Activated CD4-positive, alpha-beta memory T cell treated with anti-CD3 and anti-CD28 coated beads for 36 hours (primary cell): ENCODE measurements at regions of chr20 and their contacts with region 1.

Region 1: GRCh38 chr20:36199345-36200257 is 36.7 kb upstream of the AAR2 start:
- DNase-seq: peak; percentile 81
- H3K4me3 Mint-ChIP-seq: no peak overlapping the region
- H3K27ac Mint-ChIP-seq: no peak overlapping the region
- H3K4me1 Mint-ChIP-seq: peaks cover 4% of the 10 kb centered on the region
- H3K27me3 Mint-ChIP-seq: peaks cover 1% of the 10 kb centered on the region

Region 2: GRCh38 chr20:36154700-36155628 is 44.6 kb before region 1 on chr20 and contains the start of gene EPB41L1:
- CTCF ChIA-PET with region 1: interaction called, 34 read pairs
- POLR2A ChIA-PET with region 1: no interaction called
- intact Hi-C with region 1: loop called (anchors 1 kb)
- DNase-seq: no peak
- H3K4me3 Mint-ChIP-seq: no peak within 1 kb of the TSS
- H3K27ac Mint-ChIP-seq: no peak within 1 kb of the TSS
- H3K4me1 Mint-ChIP-seq: no peaks in the 10 kb centered on the region
- H3K27me3 Mint-ChIP-seq: peaks cover 20% of the 10 kb centered on the region
- total RNA-seq, gene EPB41L1: 0.36 to 0.88 TPM

Region 3: GRCh38 chr20:36183155-36183944 is 16.3 kb before region 1 on chr20:
- CTCF ChIA-PET with region 1: interaction called, 14 read pairs
- POLR2A ChIA-PET with region 1: no interaction called
- intact Hi-C with region 1: no loop called
- DNase-seq: no peak
- H3K4me3 Mint-ChIP-seq: no peak overlapping the region
- H3K27ac Mint-ChIP-seq: no peak overlapping the region
- H3K4me1 Mint-ChIP-seq: no peaks in the 10 kb centered on the region
- H3K27me3 Mint-ChIP-seq: no peaks in the 10 kb centered on the region

Region 4: GRCh38 chr20:36214684-36215256 is 15.2 kb after region 1 on chr20:
- CTCF ChIA-PET with region 1: interaction called, 17 read pairs
- POLR2A ChIA-PET with region 1: no interaction called
- intact Hi-C with region 1: no loop called
- DNase-seq: peak; percentile 15
- H3K4me3 Mint-ChIP-seq: no peak overlapping the region
- H3K27ac Mint-ChIP-seq: no peak overlapping the region
- H3K4me1 Mint-ChIP-seq: no peaks in the 10 kb centered on the region
- H3K27me3 Mint-ChIP-seq: no peaks in the 10 kb centered on the region

Region 5: DNA sequence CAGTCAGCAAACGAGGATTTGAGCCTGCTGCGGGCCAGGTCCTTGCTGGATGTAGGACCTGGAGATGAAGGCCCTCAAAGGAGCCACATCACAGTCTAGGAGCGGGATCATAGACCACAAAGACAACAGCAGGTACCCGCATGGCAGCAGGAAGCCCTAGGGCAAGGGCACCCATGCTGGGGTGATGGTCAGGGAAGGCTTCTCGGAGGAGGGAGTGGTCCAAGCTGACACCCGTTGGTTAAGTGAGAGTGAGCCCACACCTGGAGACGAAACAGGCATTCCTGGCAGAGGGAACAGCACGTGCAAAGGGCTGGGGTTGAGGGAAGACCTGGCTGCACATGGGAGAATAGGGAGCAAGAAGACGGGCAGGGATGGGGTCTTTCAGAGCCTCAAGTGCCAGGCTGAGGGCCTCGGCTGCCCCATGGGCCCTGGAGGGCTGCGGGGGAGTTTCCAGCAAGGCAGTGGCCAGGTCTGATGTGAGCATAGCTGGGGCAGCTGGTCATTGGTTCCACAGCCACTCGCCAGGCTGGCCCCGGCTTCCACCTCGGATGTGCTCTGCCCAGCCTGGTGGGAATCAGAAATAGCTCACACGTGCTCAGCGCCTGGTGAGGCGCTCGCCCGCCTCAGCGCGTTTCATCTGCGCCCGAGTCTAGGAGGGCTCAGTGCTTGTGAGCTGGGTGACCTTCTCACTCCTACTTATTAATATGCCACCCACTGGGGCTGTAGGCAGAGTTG is 121.5 kb after region 1 on chr20:
- CTCF ChIA-PET with region 1: no interaction called
- POLR2A ChIA-PET with region 1: no interaction called
- intact Hi-C with region 1: no loop called
- DNase-seq: no peak
- H3K4me3 Mint-ChIP-seq: no peak overlapping the region
- H3K27ac Mint-ChIP-seq: no peak overlapping the region
- H3K4me1 Mint-ChIP-seq: no peaks in the 10 kb centered on the region
- H3K27me3 Mint-ChIP-seq: peaks cover 8% of the 10 kb centered on the region

Region 6: GRCh38 chr20:36367907-36368799 is 168.6 kb after region 1 on chr20:
- CTCF ChIA-PET with region 1: no interaction called
- POLR2A ChIA-PET with region 1: no interaction called
- intact Hi-C with region 1: no loop called
- DNase-seq: no peak
- H3K4me3 Mint-ChIP-seq: no peak overlapping the region
- H3K27ac Mint-ChIP-seq: no peak overlapping the region
- H3K4me1 Mint-ChIP-seq: no peaks in the 10 kb centered on the region
- H3K27me3 Mint-ChIP-seq: peaks cover 2% of the 10 kb centered on the region

Region 7: GRCh38 chr20:36399147-36399968 is 199.8 kb after region 1 on chr20:
- CTCF ChIA-PET with region 1: interaction called, 13 read pairs
- POLR2A ChIA-PET with region 1: no interaction called
- intact Hi-C with region 1: no loop called
- DNase-seq: peak; percentile 68
- H3K4me3 Mint-ChIP-seq: no peak overlapping the region
- H3K27ac Mint-ChIP-seq: no peak overlapping the region
- H3K4me1 Mint-ChIP-seq: peaks cover 2% of the 10 kb centered on the region
- H3K27me3 Mint-ChIP-seq: peaks cover 19% of the 10 kb centered on the region

Region 8: GRCh38 chr20:36415475-36416002 is 215.9 kb after region 1 on chr20:
- CTCF ChIA-PET with region 1: no interaction called
- POLR2A ChIA-PET with region 1: no interaction called
- intact Hi-C with region 1: no loop called
- DNase-seq: no peak
- H3K4me3 Mint-ChIP-seq: no peak overlapping the region
- H3K27ac Mint-ChIP-seq: no peak overlapping the region
- H3K4me1 Mint-ChIP-seq: no peaks in the 10 kb centered on the region
- H3K27me3 Mint-ChIP-seq: peaks cover 7% of the 10 kb centered on the region

Region 9: DNA sequence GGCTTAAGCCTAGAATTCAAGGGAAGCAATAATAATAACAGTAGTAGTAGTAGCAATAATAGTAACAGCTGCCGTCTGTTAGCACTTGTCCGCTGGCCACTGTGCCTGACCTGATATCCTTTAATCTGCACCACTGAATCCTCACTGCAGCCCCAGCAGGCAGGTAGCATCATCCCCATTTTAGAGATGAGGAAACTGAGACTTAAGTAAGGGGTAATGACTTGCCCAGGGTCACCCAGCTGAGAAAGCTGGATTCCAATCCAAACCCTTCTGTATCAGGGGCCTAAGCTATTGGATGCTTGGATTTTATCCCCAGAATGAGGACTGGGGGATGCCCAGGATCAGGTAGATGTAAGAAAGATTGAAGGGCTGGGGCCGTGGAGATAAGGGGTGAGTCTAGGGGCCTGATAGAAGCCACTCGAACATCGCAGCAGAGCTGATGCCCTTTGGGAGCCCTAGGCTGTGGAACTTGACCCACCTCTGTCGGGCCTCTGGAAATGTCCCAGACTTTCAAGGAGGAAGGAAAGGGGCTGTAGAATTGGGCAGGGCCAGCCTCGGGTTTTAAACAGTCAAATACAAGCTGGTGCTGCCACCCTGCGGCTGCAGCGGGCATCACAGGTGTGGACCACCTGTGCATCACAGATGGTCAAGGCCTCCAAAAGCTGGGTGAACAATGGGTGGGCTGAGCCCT is 239.6 kb after region 1 on chr20:
- CTCF ChIA-PET with region 1: interaction called, 101 read pairs
- POLR2A ChIA-PET with region 1: interaction called, 3 read pairs
- intact Hi-C with region 1: loop called (anchors 2 kb)
- DNase-seq: peak; percentile 75
- H3K4me3 Mint-ChIP-seq: peak overlapping the region; percentile 18
- H3K27ac Mint-ChIP-seq: no peak overlapping the region
- H3K4me1 Mint-ChIP-seq: peaks cover 2% of the 10 kb centered on the region
- H3K27me3 Mint-ChIP-seq: peaks cover 1% of the 10 kb centered on the region

Region 10: DNA sequence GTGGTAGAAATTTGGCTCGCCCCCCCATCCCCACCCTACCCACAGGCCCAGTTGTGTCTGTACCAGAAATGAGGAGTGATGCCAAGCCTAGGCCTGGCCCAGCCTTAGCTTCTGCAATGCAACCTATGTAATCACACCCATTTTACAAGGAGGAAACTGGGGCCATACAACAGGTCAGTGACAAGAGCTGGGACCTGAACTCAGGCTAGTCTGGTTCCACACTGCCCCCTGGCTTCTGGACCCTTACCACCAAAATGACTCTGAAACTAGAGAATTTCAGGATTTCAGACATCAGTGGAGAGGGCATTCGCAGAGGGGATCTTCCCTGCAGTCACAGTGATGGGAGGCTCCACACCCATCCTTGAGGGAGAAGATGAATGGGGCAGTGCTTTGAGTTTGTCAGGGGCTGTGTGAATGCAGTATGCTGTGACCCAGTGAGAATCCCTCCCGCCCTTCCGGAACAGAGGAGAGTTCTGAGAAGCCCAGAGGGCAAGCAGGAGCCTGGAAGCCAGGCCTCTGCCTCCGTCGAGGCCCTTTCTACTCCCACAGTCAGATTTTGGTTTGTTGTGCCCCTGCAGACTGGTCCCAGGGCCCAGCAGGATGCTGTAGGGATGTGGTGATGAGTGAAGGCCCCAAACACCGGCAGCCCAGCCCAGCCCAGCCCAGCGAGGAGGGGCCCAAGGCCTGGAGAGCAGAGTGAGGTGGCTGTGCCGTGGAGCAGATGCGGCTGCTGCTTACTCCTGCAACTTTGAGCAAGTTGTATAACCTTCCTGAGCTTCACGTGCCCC is 293.6 kb after region 1 on chr20:
- CTCF ChIA-PET with region 1: interaction called, 4 read pairs
- POLR2A ChIA-PET with region 1: no interaction called
- intact Hi-C with region 1: loop called (anchors 5 kb)
- DNase-seq: peak; percentile 55
- H3K4me3 Mint-ChIP-seq: no peak overlapping the region
- H3K27ac Mint-ChIP-seq: no peak overlapping the region
- H3K4me1 Mint-ChIP-seq: peaks cover 35% of the 10 kb centered on the region
- H3K27me3 Mint-ChIP-seq: no peaks in the 10 kb centered on the region